Stomach (tissue), 19 donors: ENCODE measurements at regions of chr14 and their contacts with region 1.

Region 1: GRCh38 chr14:50773632-50774541 is 57.1 kb downstream of the NIN start:
- DNase-seq: peak; percentile 44 to 69
- H3K4me3 ChIP-seq: no peak overlapping the region
- H3K27ac ChIP-seq: peak overlapping the region in 3 of 5 donors; percentile 67 to 80 (median 76)
- H3K4me1 ChIP-seq: peaks cover 0 to 51% (median 26%) of the 10 kb centered on the region in 4 donors
- H3K27me3 ChIP-seq: no peaks in the 10 kb centered on the region
- CTCF ChIP-seq: peak in 5 of 7 experiments; percentile 66 to 81 (median 75)
- EP300 ChIP-seq: no peak
- POLR2A ChIP-seq: no peak

Region 2: DNA sequence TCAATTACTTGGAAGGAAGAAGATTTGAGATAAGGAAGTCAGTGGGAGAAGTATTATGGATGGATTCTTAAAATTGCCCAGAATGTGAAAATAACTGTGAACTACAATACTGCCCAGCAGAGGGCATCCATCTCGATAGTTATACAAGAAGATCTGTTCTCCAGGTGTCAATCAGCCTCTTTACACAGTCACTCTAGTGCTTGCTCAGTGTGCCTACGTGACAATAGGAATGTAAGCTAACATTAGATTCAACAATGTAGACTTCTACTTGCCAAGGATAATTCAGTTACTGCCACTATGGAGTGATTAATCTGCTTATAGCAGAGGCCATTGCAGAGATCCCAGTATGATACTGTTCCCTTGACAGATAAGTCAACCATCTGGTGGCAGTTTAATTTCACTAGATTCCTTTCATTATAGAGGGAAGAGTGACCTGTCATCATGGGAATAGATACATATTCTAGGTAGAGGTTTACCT is 230.9 kb before region 1 on chr14:
- intact Hi-C with region 1: loop called (anchors 10 kb)
- DNase-seq: peak; percentile 38 to 71
- H3K4me3 ChIP-seq: no peak overlapping the region
- H3K27ac ChIP-seq: no peak overlapping the region
- H3K4me1 ChIP-seq: peaks cover 0 to 29% (median 12%) of the 10 kb centered on the region in 4 donors
- H3K27me3 ChIP-seq: no peaks in the 10 kb centered on the region
- CTCF ChIP-seq: peak in 5 of 7 experiments; percentile 15 to 62 (median 50)
- EP300 ChIP-seq: no peak
- POLR2A ChIP-seq: no peak

Region 3: GRCh38 chr14:50599700-50600444 is 174.0 kb before region 1 on chr14:
- intact Hi-C with region 1: loop called (anchors 10 kb)
- DNase-seq: peak in 1 of 2 donors; percentile 68
- H3K4me3 ChIP-seq: no peak overlapping the region
- H3K27ac ChIP-seq: no peak overlapping the region
- H3K4me1 ChIP-seq: peaks cover 0 to 12% (median 8%) of the 10 kb centered on the region in 4 donors
- H3K27me3 ChIP-seq: no peaks in the 10 kb centered on the region
- CTCF ChIP-seq: peak in 5 of 7 experiments; percentile 26 to 66 (median 52)
- EP300 ChIP-seq: no peak
- POLR2A ChIP-seq: no peak

Region 4: GRCh38 chr14:51014086-51014485 is 240.2 kb after region 1 on chr14:
- intact Hi-C with region 1: no loop called
- DNase-seq: peak in 1 of 2 donors; percentile 58
- H3K4me3 ChIP-seq: no peak overlapping the region
- H3K27ac ChIP-seq: no peak overlapping the region
- H3K4me1 ChIP-seq: no peaks in the 10 kb centered on the region
- H3K27me3 ChIP-seq: no peaks in the 10 kb centered on the region
- CTCF ChIP-seq: no peak
- EP300 ChIP-seq: no peak
- POLR2A ChIP-seq: no peak

Region 5: DNA sequence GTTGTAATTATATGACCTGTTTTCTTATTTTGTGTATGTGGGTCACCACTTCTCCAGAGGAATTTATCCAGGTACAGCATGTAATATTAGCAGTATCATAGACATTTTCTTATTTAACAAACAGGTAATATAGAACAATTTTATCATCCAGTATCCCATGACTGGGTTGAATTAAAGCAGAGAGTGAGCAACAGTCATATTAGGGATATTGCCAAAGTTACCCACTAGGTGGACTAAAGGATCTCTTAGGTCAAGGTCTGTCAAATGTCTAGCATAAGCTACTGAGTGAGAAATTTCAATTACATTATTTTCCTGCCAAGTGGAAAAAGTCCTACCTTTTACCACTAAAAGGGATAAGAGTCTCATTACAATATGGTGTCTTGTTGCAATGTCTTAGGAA is 383.1 kb after region 1 on chr14:
- intact Hi-C with region 1: no loop called
- DNase-seq: peak in 1 of 2 donors; percentile 14
- H3K4me3 ChIP-seq: no peak overlapping the region
- H3K27ac ChIP-seq: no peak overlapping the region
- H3K4me1 ChIP-seq: no peaks in the 10 kb centered on the region
- H3K27me3 ChIP-seq: no peaks in the 10 kb centered on the region
- CTCF ChIP-seq: no peak
- EP300 ChIP-seq: no peak
- POLR2A ChIP-seq: no peak